Psoas muscle (tissue), 8 donors: ENCODE measurements at regions of chrX and their contacts with region 1.

Region 1: DNA sequence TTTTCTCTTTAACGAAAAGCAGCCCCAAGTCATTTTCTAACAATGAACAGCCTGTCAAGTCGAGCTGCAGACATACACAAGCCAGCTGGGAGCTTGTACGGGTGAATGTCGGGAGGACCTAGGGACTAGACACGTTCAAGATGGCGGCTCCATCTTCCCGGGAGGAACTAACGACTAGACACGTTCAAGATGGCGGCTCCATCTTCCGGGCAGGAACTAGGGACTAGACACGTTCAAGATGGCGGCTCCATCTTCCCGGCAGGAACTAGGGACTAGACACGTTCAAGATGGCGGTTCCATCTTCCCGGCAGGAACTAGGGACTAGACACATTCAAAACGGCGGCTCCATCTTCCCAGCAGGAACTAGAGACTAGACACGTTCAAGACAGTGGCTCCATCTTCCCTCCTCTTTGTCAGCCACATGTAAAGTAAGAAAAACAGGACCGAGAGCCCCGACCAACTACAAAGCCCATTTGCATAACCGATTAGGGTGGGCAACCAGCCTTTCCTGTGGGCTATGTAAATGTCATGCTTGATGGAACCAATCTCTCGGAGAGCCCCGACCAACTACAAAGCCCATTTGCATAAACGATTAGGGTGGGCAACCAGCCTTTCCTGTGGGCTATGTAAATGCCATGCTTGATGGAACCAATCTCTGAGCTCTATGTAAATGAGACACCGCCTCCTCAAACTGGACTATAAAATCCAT is 175.5 kb downstream of the DHRSX start:
- DNase-seq: peak; percentile 82 to 88
- ATAC-seq: peak; percentile 12 to 61 (median 60)
- H3K4me3 ChIP-seq: peak overlapping the region; percentile 70
- H3K27ac ChIP-seq: peak overlapping the region; percentile 78
- H3K4me1 ChIP-seq: no peaks in the 10 kb centered on the region
- H3K27me3 ChIP-seq: no peaks in the 10 kb centered on the region
- CTCF ChIP-seq: no peak

Region 2: DNA sequence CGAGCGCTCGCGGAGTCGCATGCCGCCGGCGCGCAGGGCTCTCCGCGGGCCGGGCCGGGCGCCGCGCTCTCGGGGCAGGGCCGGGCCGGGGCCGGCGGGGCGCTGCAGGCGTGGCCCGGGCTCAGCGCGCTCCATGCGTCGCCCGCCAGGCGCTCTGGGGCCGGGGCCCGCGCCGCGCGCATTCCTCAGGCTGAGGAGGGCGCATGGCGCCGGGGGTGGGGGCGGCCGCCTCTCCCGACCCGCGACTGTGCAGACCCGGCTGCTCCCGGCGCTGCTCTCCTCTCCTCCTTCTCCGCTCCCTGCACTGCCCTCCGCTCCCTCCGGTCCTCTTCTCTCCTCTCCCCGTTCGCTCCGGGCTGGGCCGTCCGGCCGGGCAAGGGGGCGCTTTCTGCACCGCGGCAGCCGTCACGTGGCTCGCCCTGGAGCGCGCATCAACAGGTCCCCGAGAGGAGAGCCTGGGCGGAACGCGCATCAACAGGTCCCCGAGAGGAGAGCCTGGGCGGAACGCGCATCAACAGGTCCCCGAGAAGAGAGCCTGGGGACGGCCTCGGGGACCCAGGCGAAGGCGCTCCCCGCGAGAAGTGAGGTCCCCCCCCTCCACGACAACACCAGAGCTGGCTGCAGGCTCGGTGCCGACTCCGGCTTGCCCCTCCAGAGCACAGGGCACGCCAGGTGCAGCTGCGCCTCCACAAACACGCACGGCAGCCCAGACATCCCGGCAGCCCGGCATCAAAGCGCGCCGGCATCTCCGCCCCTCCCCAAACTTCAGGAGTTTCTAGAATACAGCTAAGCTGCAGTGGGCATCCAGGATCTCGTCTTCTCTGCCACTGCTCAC is 1951.4 kb before region 1 on chrX:
- intact Hi-C with region 1: loop called in 1 of 2 experiments (anchors 10 kb)
- DNase-seq: peak in 1 of 2 donors; percentile 81
- ATAC-seq: peak; percentile 17 to 46 (median 28)
- H3K4me3 ChIP-seq: peak overlapping the region; percentile 74
- H3K27ac ChIP-seq: peak overlapping the region; percentile 97
- H3K4me1 ChIP-seq: peaks cover 22% of the 10 kb centered on the region
- H3K27me3 ChIP-seq: no peaks in the 10 kb centered on the region
- CTCF ChIP-seq: no peak

Region 3: DNA sequence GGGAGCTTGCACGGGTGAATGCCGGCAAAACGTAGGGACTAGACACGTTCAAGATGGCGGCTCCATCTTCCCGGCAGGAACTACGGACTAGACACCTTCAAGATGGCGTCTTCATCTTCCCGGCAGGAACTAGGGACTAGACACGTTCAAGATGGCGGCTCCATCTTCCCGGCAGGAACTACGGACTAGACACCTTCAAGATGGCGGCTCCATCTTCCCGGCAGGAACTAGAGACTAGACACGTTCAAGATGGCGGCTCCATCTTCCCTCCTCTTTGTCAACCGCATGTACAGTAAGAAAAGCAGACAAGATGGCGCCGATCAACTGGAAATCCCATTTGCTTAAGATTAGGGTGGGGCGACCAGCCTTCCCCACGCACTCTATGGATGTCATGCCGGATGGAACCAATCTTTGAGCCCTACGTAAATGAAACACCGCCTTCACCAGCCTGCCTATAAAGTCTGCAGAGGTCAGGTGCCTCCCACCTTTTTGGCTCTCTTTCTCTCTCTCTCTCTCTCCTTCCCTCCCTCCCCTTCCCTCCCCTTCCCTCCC is 1335.2 kb before region 1 on chrX:
- intact Hi-C with region 1: loop called (anchors 10 kb)
- DNase-seq: peak; percentile 78 to 91
- ATAC-seq: peak; percentile 98 to 99 (median 99)
- H3K4me3 ChIP-seq: peak overlapping the region; percentile 64
- H3K27ac ChIP-seq: peak overlapping the region; percentile 55
- H3K4me1 ChIP-seq: no peaks in the 10 kb centered on the region
- H3K27me3 ChIP-seq: peaks cover 0 to 2% (median 0%) of the 10 kb centered on the region in 3 donors
- CTCF ChIP-seq: no peak

Region 4: GRCh38 chrX:1591102-1591900 is 733.9 kb before region 1 on chrX and contains the start of gene AKAP17A:
- intact Hi-C with region 1: loop called in 1 of 2 experiments (anchors 10 kb)
- DNase-seq: peak; percentile 96 to 98
- ATAC-seq: peak; percentile 97 to 99 (median 98)
- H3K4me3 ChIP-seq: peak within 1 kb of the TSS; percentile 77
- H3K27ac ChIP-seq: peak within 1 kb of the TSS; percentile 88
- H3K4me1 ChIP-seq: peaks cover 12% of the 10 kb centered on the region
- H3K27me3 ChIP-seq: no peaks in the 10 kb centered on the region
- CTCF ChIP-seq: no peak
- total RNA-seq, gene AKAP17A: 9.9 to 20.4 (median 13.1) TPM

Region 5: GRCh38 chrX:2401590-2402360 is 76.5 kb after region 1 on chrX:
- intact Hi-C with region 1: loop called in 1 of 2 experiments (anchors 5 kb)
- DNase-seq: peak; percentile 46 to 61
- ATAC-seq: peak; percentile 86 to 93 (median 90)
- H3K4me3 ChIP-seq: peak overlapping the region; percentile 44
- H3K27ac ChIP-seq: peak overlapping the region; percentile 78
- H3K4me1 ChIP-seq: peaks cover 7% of the 10 kb centered on the region
- H3K27me3 ChIP-seq: no peaks in the 10 kb centered on the region
- CTCF ChIP-seq: no peak

Region 6: DNA sequence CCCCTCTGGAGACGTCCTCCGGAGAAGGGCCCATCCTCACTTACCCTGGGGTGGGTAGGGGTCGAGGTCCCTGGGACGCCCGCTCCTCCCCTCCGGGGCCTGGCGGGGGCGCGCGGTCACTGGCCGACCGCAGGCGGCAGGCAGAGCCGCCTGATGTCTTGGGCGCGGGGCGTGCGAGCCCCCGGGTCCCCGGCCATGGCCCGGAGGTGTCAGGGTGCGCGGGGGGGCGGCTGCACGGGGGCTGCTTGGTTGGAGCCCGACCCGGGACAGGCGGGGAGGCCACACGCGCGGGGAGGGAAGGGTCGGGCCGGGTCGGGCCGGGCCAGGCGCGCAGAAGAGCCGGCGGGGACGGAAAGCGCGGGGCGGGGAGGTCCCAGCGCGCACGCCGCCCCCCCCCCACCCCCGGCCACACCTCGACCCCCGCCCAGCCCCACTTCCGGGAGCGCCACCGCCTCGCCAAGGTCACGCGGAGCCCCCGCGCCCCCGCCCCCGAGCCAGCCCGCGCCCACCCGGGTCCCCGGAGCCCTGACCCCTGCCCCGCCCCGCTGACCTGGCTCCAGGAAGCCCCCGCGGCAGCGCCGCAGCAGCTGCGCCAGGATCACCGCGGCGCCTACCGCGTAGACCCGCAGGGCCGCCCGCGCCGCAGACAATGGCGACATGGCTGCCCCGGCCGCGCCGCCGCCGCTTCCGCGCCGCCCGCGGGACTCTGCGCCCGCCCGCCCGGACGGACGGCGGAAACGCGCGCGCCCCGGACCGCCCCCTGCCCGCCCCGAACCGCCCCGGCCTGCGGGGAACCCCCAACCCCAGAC is 175.2 kb after region 1 on chrX and contains the starts of genes DHRSX and ZBED1:
- intact Hi-C with region 1: loop called in 1 of 2 experiments (anchors 5 kb)
- DNase-seq: peak; percentile 47 to 66
- ATAC-seq: peak; percentile 61 to 68 (median 64)
- H3K4me3 ChIP-seq: peak within 1 kb of the TSS; percentile 85
- H3K27ac ChIP-seq: peak within 1 kb of the TSS; percentile 90
- H3K4me1 ChIP-seq: peaks cover 14% of the 10 kb centered on the region
- H3K27me3 ChIP-seq: no peaks in the 10 kb centered on the region
- CTCF ChIP-seq: no peak
- total RNA-seq, gene DHRSX: 9.6 to 19.3 (median 12.7) TPM
- total RNA-seq, gene ZBED1: 28.7 to 63.1 (median 36.3) TPM